Body of pancreas (tissue), 4 donors: ENCODE measurements at regions of chr6 and their contacts with region 1.

Region 1: DNA sequence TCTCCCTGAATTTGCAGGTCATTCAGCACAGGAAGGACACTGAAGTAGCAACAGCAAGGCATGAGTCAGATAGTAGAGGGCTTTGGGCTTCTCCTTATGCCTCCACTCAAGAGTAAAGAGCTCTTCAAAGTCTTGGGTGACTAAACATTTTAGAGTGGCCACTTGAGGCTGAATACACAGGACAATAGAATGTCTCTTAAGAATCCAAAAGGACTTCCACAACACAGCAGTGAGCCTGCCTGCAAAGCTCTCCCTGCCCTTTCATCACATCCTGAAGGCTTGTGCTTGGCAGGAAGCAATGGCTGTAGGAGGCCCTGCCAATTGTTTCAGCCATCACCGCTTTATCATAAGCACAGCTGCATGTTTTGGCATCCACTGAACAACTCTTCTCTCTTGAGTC is 36.8 kb downstream of the FOXQ1 start:
- DNase-seq: peak in 1 of 4 donors; percentile 16
- ATAC-seq: no peak
- H3K4me3 ChIP-seq: no peak overlapping the region
- H3K27ac ChIP-seq: no peak overlapping the region
- H3K4me1 ChIP-seq: no peaks in the 10 kb centered on the region
- H3K27me3 ChIP-seq: no peaks in the 10 kb centered on the region
- CTCF ChIP-seq: no peak
- POLR2A ChIP-seq: no peak

Region 2: DNA sequence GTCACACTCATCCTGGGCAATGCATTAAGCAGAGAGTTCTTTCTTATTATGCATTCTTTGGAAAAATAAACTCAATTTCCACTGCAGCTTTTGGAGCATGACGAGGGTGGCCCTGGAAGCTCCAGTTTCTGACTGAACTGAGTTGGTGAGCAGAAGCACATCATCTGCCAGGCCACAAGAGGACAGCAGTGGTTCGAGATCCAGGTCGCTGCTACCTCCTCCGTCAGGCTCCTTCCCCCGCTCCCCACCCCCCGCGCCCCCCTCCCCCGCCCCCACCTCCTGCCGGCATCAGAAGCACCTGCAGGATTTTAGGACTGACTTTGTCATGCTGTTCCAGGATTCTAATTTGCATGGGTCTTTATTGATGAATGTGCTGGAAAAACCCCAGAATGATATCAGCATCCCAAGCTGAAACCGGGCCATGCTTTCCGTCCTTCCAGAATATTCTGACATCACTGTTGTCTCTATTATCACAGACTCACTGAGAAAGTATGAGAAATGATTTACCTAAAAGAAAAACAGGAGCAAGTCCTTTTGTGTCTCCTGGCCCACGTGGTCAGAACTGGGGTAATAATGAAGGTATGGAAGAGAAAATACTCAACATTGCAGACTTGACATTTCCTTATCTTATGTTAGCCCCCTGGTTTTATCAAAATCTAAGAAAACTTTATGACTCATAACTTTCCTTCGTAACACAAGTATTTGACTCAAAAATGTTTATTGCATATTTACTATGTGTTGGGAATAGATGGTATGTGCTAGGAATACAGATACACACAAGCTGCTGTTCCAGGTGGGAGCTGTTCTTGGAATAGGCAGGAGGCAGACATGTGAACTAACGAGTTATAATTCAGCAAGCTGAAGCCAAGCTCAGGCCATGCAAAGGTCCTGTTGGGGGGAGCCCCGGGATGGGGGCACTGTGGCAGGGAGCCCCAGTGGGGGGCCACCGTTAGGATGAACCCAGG is 435.5 kb before region 1 on chr6:
- intact Hi-C with region 1: loop called (anchors 10 kb)
- DNase-seq: peak; percentile 53 to 74 (median 70)
- ATAC-seq: peak; percentile 74
- H3K4me3 ChIP-seq: no peak overlapping the region
- H3K27ac ChIP-seq: peak overlapping the region in 1 of 4 donors; percentile 36
- H3K4me1 ChIP-seq: no peaks in the 10 kb centered on the region
- H3K27me3 ChIP-seq: no peaks in the 10 kb centered on the region
- CTCF ChIP-seq: peak; percentile 41 to 75 (median 58)
- POLR2A ChIP-seq: no peak

Region 3: DNA sequence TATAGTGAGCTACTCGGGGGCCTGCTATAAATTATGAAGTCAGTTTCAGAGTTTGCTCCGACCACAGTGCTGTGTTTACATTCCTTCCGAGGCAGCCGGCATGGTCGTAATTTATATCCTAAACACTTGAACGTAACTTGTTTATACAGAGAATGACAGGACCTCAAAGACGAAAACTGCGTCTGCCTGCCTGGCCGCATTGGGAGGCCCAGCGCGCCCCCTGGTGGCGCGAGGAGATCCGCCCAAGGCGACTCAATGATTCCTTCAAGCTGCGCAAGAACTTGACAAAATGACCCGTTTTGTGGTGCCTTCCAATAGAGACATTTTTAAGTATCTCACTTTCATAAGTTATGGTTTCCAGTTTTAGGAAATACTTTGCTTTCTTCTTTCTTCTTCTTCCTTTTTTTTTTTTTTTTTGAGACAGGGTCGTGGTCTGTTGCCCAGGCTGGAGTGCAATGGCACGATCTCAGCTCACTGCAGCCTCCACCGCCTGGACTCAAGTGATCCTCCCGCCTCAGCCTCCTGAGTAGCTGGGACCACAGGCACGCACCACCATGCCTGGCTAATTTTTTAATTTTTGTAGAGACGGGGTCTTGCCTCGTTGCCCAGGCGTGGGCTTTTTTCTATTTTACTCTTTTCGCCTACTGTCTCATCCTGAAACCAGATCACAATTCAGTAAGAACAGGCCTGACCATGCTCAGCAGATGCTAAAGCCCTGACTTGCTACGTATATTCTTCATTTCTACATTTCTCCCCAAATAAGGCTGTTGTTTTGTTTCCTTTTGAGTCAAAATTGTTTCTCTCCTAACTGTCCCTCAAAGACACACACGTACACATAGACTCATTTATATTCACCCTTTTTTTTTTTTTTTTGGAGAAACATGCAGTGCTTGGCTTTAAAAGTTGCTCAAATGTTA is 48.5 kb after region 1 on chr6:
- intact Hi-C with region 1: no loop called
- DNase-seq: peak; percentile 62 to 75 (median 64)
- ATAC-seq: peak; percentile 45
- H3K4me3 ChIP-seq: no peak overlapping the region
- H3K27ac ChIP-seq: no peak overlapping the region
- H3K4me1 ChIP-seq: peaks cover 15% of the 10 kb centered on the region
- H3K27me3 ChIP-seq: peaks cover 0 to 16% of the 10 kb centered on the region in 2 donors
- CTCF ChIP-seq: peak; percentile 72 to 98 (median 78)
- POLR2A ChIP-seq: no peak